Lower leg skin (tissue), 4 donors: ENCODE measurements at regions of chr7 and their contacts with region 1.

Region 1: GRCh38 chr7:70267381-70268120 is 669.3 kb downstream of the AUTS2 start:
- DNase-seq: no peak
- H3K4me3 ChIP-seq: no peak overlapping the region
- CTCF ChIP-seq: no peak
- POLR2A ChIP-seq: no peak

Region 2: DNA sequence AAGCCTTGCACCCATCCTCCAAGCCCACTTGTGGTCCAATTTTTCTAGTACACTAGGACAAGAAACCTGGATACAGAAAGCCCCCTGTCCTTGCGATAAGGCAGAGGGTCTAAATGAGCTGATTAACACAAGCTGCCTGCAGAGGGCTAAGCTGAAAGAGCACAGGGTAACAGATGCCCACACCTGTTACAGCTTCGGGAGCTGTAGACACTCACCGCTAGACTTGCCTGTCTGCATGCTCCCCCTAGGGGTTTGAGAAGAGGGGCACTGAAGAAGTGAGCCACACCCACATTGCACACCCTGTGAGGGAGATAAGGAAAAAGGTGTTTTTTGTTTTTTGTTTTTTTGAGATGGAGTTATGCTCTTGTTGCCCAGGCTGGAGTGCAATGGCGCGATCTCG is 1055.8 kb before region 1 on chr7:
- intact Hi-C with region 1: no loop called
- DNase-seq: peak in 1 of 2 donors; percentile 17
- H3K4me3 ChIP-seq: no peak overlapping the region
- CTCF ChIP-seq: no peak
- POLR2A ChIP-seq: no peak

Region 3: GRCh38 chr7:70210936-70211310 is 56.6 kb before region 1 on chr7:
- intact Hi-C with region 1: loop called (anchors 5 kb)
- DNase-seq: no peak
- H3K4me3 ChIP-seq: no peak overlapping the region
- CTCF ChIP-seq: no peak
- POLR2A ChIP-seq: no peak

Region 4: GRCh38 chr7:70242826-70243225 is 24.7 kb before region 1 on chr7:
- intact Hi-C with region 1: loop called (anchors 2 kb)
- DNase-seq: no peak
- H3K4me3 ChIP-seq: no peak overlapping the region
- CTCF ChIP-seq: no peak
- POLR2A ChIP-seq: no peak

Region 5: GRCh38 chr7:70354409-70355169 is 87.0 kb after region 1 on chr7:
- intact Hi-C with region 1: no loop called
- DNase-seq: peak in 1 of 2 donors; percentile 46
- H3K4me3 ChIP-seq: no peak overlapping the region
- CTCF ChIP-seq: no peak
- POLR2A ChIP-seq: no peak